ENCODE measurements at regions of chr12 and their contacts with region 1.

Region 1: GRCh38 chr12:130775953-130776856 is 60.1 kb upstream of the RIMBP2 start:
- DNase-seq: peak in 5 of 9 donors; percentile 11 to 65 (median 27)
- ATAC-seq: peak; percentile 75
- H3K4me3 ChIP-seq: peak overlapping the region; percentile 57
- H3K4me3 Mint-ChIP-seq: peak overlapping the region; percentile 77 to 92 (median 84)
- H3K27ac ChIP-seq: no peak overlapping the region
- H3K27ac Mint-ChIP-seq: peak overlapping the region in 3 of 9 donors; percentile 1 to 59 (median 14)
- H3K4me1 ChIP-seq: peaks cover 3 to 8% of the 10 kb centered on the region in 2 donors
- H3K4me1 Mint-ChIP-seq: peaks cover 8 to 16% (median 12%) of the 10 kb centered on the region in 7 donors
- H3K27me3 ChIP-seq: no peaks in the 10 kb centered on the region
- H3K27me3 Mint-ChIP-seq: peaks cover 11 to 33% (median 17%) of the 10 kb centered on the region in 5 donors

Region 2: GRCh38 chr12:130796985-130797686 is 20.9 kb after region 1 on chr12:
- CTCF ChIA-PET with region 1: no interaction called
- POLR2A ChIA-PET with region 1: no interaction called
- intact Hi-C with region 1: loop called in 1 of 2 experiments (anchors 2 kb)
- DNase-seq: peak in 5 of 9 donors; percentile 5 to 38 (median 15)
- ATAC-seq: peak; percentile 85
- H3K4me3 ChIP-seq: peak overlapping the region; percentile 35
- H3K4me3 Mint-ChIP-seq: peak overlapping the region in 9 of 10 donors; percentile 41 to 75 (median 59)
- H3K27ac ChIP-seq: peak overlapping the region; percentile 36
- H3K27ac Mint-ChIP-seq: peak overlapping the region; percentile 21 to 90 (median 72)
- H3K4me1 ChIP-seq: peaks cover 0 to 5% of the 10 kb centered on the region in 2 donors
- H3K4me1 Mint-ChIP-seq: peaks cover 0 to 18% (median 3%) of the 10 kb centered on the region in 7 donors
- H3K27me3 ChIP-seq: no peaks in the 10 kb centered on the region
- H3K27me3 Mint-ChIP-seq: no peaks in the 10 kb centered on the region

Measured in naive thymus-derived CD4-positive, alpha-beta T cell (primary cell).